Naive thymus-derived CD4-positive, alpha-beta T cell (primary cell): ENCODE measurements at regions of chr14 and their contacts with region 1.

Region 1: GRCh38 chr14:35140718-35141581 is 18.6 kb downstream of the PRORP start:
- DNase-seq: peak in 4 of 9 donors; percentile 24 to 57 (median 40)
- ATAC-seq: peak; percentile 69
- H3K4me3 ChIP-seq: no peak overlapping the region
- H3K4me3 Mint-ChIP-seq: no peak overlapping the region
- H3K27ac ChIP-seq: peak overlapping the region; percentile 40
- H3K27ac Mint-ChIP-seq: peak overlapping the region in 6 of 9 donors; percentile 65 to 91 (median 75)
- H3K4me1 ChIP-seq: no peaks in the 10 kb centered on the region
- H3K4me1 Mint-ChIP-seq: peaks cover 2 to 26% (median 17%) of the 10 kb centered on the region in 7 donors
- H3K27me3 ChIP-seq: no peaks in the 10 kb centered on the region
- H3K27me3 Mint-ChIP-seq: no peaks in the 10 kb centered on the region

Region 2: DNA sequence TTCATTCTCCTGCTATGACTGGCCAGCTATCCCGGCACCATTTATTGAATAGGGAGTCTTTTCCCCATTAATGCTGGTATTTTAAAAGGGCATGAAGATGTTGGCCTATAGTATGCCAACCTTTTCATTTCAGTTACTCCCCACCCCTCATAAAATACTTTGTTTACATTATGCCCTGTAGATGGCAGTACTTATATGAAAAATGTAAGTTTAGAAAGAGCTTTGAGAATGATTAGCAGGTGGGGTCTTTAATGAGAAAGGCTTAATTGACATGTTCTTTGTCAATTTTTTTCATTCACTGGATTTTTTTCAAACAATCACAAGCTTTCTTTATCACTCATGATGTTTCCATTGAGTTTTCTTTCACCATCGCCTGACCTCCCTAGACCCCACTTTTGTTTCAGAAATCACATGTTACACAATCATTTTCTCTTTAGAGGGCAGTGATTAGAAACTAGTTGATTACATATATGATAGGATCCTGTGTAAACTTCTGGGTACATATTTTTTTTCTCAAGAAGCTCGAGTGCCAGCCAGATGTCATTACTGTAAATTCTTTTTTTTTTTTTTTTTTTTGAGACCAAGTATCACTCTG is 88.6 kb after region 1 on chr14:
- CTCF ChIA-PET with region 1: interaction called, 5 read pairs
- POLR2A ChIA-PET with region 1: no interaction called
- intact Hi-C with region 1: loop called in 1 of 2 experiments (anchors 10 kb)
- DNase-seq: peak in 6 of 9 donors; percentile 3 to 41 (median 30)
- ATAC-seq: peak; percentile 61
- H3K4me3 ChIP-seq: no peak overlapping the region
- H3K4me3 Mint-ChIP-seq: no peak overlapping the region
- H3K27ac ChIP-seq: no peak overlapping the region
- H3K27ac Mint-ChIP-seq: peak overlapping the region in 1 of 9 donors; percentile 72
- H3K4me1 ChIP-seq: no peaks in the 10 kb centered on the region
- H3K4me1 Mint-ChIP-seq: peaks cover 6 to 27% (median 16%) of the 10 kb centered on the region in 7 donors
- H3K27me3 ChIP-seq: no peaks in the 10 kb centered on the region
- H3K27me3 Mint-ChIP-seq: no peaks in the 10 kb centered on the region

Region 3: GRCh38 chr14:35395283-35395682 is 254.3 kb after region 1 on chr14:
- CTCF ChIA-PET with region 1: no interaction called
- POLR2A ChIA-PET with region 1: no interaction called
- intact Hi-C with region 1: no loop called
- DNase-seq: no peak
- ATAC-seq: no peak
- H3K4me3 ChIP-seq: no peak overlapping the region
- H3K4me3 Mint-ChIP-seq: no peak overlapping the region
- H3K27ac ChIP-seq: no peak overlapping the region
- H3K27ac Mint-ChIP-seq: peak overlapping the region in 1 of 9 donors; percentile 36
- H3K4me1 ChIP-seq: peaks cover 0 to 8% of the 10 kb centered on the region in 2 donors
- H3K4me1 Mint-ChIP-seq: peaks cover 3 to 23% (median 20%) of the 10 kb centered on the region in 7 donors
- H3K27me3 ChIP-seq: no peaks in the 10 kb centered on the region
- H3K27me3 Mint-ChIP-seq: no peaks in the 10 kb centered on the region

Region 4: DNA sequence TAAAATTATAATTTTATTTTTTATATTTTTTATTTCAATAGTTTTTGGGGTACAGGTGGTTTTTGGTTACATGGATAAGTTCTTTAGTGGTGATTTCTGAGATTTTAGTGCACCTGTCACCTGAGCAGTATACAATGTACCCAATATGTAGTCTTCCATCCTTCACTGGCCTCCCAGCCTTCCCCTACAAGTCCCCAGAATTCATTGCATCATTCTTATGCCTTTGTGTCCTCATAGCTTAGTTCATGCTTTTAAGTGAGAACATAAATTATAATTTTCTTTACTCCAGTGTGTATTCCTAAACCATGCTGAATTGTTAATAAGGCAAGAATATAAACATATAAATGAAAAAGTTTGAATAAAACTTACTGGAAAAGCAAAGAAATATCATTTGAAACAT is 282.7 kb after region 1 on chr14:
- CTCF ChIA-PET with region 1: interaction called, 14 read pairs
- POLR2A ChIA-PET with region 1: no interaction called
- intact Hi-C with region 1: loop called (anchors 1 kb)
- DNase-seq: no peak
- ATAC-seq: no peak
- H3K4me3 ChIP-seq: no peak overlapping the region
- H3K4me3 Mint-ChIP-seq: no peak overlapping the region
- H3K27ac ChIP-seq: no peak overlapping the region
- H3K27ac Mint-ChIP-seq: peak overlapping the region in 1 of 9 donors; percentile 49
- H3K4me1 ChIP-seq: peaks cover 0 to under 1% of the 10 kb centered on the region in 2 donors
- H3K4me1 Mint-ChIP-seq: peaks cover 0 to 9% (median 5%) of the 10 kb centered on the region in 7 donors
- H3K27me3 ChIP-seq: no peaks in the 10 kb centered on the region
- H3K27me3 Mint-ChIP-seq: no peaks in the 10 kb centered on the region

Region 5: GRCh38 chr14:35814371-35815005 is 673.5 kb after region 1 on chr14:
- CTCF ChIA-PET with region 1: no interaction called
- POLR2A ChIA-PET with region 1: no interaction called
- intact Hi-C with region 1: loop called in 1 of 2 experiments (anchors 5 kb)
- DNase-seq: peak; percentile 54 to 83 (median 71)
- ATAC-seq: peak; percentile 96
- H3K4me3 ChIP-seq: no peak overlapping the region
- H3K4me3 Mint-ChIP-seq: no peak overlapping the region
- H3K27ac ChIP-seq: no peak overlapping the region
- H3K27ac Mint-ChIP-seq: no peak overlapping the region
- H3K4me1 ChIP-seq: no peaks in the 10 kb centered on the region
- H3K4me1 Mint-ChIP-seq: peaks cover 0 to 7% (median 1%) of the 10 kb centered on the region in 7 donors
- H3K27me3 ChIP-seq: no peaks in the 10 kb centered on the region
- H3K27me3 Mint-ChIP-seq: peaks cover 0 to 14% (median 0%) of the 10 kb centered on the region in 5 donors